Psoas muscle (tissue), 8 donors: ENCODE measurements at regions of chr16 and their contacts with region 1.

Region 1: GRCh38 chr16:80122115-80122514 is 418.7 kb upstream of the DYNLRB2 start:
- DNase-seq: peak in 1 of 2 donors; percentile 16
- ATAC-seq: no peak
- H3K4me3 ChIP-seq: no peak overlapping the region
- H3K27ac ChIP-seq: no peak overlapping the region
- H3K4me1 ChIP-seq: no peaks in the 10 kb centered on the region
- H3K27me3 ChIP-seq: no peaks in the 10 kb centered on the region
- CTCF ChIP-seq: no peak

Region 2: GRCh38 chr16:79269211-79269863 is 852.8 kb before region 1 on chr16:
- intact Hi-C with region 1: no loop called
- DNase-seq: no peak
- ATAC-seq: no peak
- H3K4me3 ChIP-seq: no peak overlapping the region
- H3K27ac ChIP-seq: no peak overlapping the region
- H3K4me1 ChIP-seq: no peaks in the 10 kb centered on the region
- H3K27me3 ChIP-seq: no peaks in the 10 kb centered on the region
- CTCF ChIP-seq: no peak

Region 3: GRCh38 chr16:79914961-79915720 is 207.0 kb before region 1 on chr16:
- intact Hi-C with region 1: loop called in 1 of 2 experiments (anchors 5 kb)
- DNase-seq: no peak
- ATAC-seq: no peak
- H3K4me3 ChIP-seq: no peak overlapping the region
- H3K27ac ChIP-seq: no peak overlapping the region
- H3K4me1 ChIP-seq: no peaks in the 10 kb centered on the region
- H3K27me3 ChIP-seq: no peaks in the 10 kb centered on the region
- CTCF ChIP-seq: no peak

Region 4: DNA sequence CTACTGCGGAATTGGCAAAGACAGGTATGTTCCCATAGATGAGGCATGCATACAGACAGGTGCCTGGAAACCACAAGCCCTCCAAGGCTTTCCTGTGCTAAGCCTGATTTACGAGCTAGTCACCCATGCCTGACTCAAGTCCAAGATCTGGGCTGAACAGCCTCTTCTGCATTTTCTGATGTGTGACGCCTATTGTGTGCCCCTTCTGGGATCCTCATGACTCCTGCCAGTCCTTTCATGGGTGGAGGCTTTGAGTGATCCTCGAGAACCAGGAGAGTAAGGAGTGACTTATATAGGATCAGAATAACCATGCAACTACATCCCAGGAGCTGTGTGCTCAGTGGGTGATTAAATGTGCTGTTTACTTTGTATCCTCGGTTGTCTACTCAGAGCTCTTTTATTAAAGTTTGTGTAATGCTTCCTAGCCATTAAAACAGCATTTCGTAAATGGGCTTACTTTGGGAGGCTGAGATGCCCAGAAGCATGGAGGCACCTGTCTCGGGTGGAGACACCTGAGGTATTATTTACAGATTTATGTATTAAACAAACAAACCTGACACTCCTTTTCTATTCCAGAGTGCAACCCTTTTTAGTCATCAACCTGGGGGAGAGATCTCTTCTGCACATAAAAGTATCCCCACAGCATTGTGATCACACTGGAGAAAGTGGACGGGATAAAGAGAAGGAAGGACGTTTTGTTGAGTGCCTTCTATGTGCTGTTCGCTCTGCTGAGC is 45.7 kb after region 1 on chr16:
- intact Hi-C with region 1: no loop called
- DNase-seq: no peak
- ATAC-seq: no peak
- H3K4me3 ChIP-seq: no peak overlapping the region
- H3K27ac ChIP-seq: no peak overlapping the region
- H3K4me1 ChIP-seq: no peaks in the 10 kb centered on the region
- H3K27me3 ChIP-seq: peaks cover 0 to 4% (median 0%) of the 10 kb centered on the region in 3 donors
- CTCF ChIP-seq: no peak